Psoas muscle (tissue), 8 donors: ENCODE measurements at regions of chr16 and their contacts with region 1.

Region 1: DNA sequence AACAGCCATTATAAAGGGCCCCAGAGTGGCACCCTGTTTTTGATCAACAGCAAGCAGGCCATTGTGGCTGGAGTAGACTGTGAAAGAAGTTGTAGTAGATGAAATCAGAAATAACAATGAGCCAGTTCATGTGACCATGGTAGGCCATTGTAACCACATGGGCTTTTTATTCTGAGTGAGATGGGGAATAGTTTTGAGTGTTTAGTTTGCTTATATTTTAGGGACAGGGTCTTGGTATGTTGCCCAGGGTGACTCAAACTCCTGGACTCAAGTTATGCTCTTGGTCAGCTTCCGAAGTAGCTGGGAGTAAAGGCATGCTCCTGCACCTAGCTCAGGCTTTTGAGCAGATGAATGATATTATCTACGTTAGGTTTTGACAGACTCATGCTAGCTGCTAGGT is 12.0 kb downstream of the CBFB start:
- DNase-seq: no peak
- ATAC-seq: peak in 1 of 4 donors; percentile 22
- H3K4me3 ChIP-seq: no peak overlapping the region
- H3K27ac ChIP-seq: no peak overlapping the region
- H3K4me1 ChIP-seq: peaks cover 22% of the 10 kb centered on the region
- H3K27me3 ChIP-seq: no peaks in the 10 kb centered on the region
- CTCF ChIP-seq: no peak

Region 2: GRCh38 chr16:66918803-66919568 is 121.9 kb before region 1 on chr16 and contains the start of gene CDH16:
- intact Hi-C with region 1: no loop called
- DNase-seq: no peak
- ATAC-seq: peak; percentile 10 to 41 (median 18)
- H3K4me3 ChIP-seq: no peak within 1 kb of the TSS
- H3K27ac ChIP-seq: peak within 1 kb of the TSS; percentile 77
- H3K4me1 ChIP-seq: no peaks in the 10 kb centered on the region
- H3K27me3 ChIP-seq: no peaks in the 10 kb centered on the region
- CTCF ChIP-seq: no peak
- total RNA-seq, gene CDH16: 0.53 to 3.3 TPM in 2 of 4 donors, not detected in the others

Region 3: GRCh38 chr16:67077871-67078270 is 37.0 kb after region 1 on chr16:
- intact Hi-C with region 1: loop called in 1 of 2 experiments (anchors 5 kb)
- DNase-seq: no peak
- ATAC-seq: peak in 1 of 4 donors; percentile 48
- H3K4me3 ChIP-seq: no peak overlapping the region
- H3K27ac ChIP-seq: no peak overlapping the region
- H3K4me1 ChIP-seq: no peaks in the 10 kb centered on the region
- H3K27me3 ChIP-seq: no peaks in the 10 kb centered on the region
- CTCF ChIP-seq: no peak

Region 4: GRCh38 chr16:67091906-67092566 is 51.1 kb after region 1 on chr16:
- intact Hi-C with region 1: loop called in 1 of 2 experiments (anchors 5 kb)
- DNase-seq: no peak
- ATAC-seq: peak in 1 of 4 donors; percentile 37
- H3K4me3 ChIP-seq: no peak overlapping the region
- H3K27ac ChIP-seq: no peak overlapping the region
- H3K4me1 ChIP-seq: peaks cover 18% of the 10 kb centered on the region
- H3K27me3 ChIP-seq: no peaks in the 10 kb centered on the region
- CTCF ChIP-seq: no peak